GM18951 (cell line): ENCODE measurements at regions of chr2 and their contacts with region 1.

Region 1: GRCh38 chr2:62415019-62415431 is 91.0 kb downstream of the TMEM17 start:
- POLR2A ChIP-seq: peak; percentile 20

Region 2: DNA sequence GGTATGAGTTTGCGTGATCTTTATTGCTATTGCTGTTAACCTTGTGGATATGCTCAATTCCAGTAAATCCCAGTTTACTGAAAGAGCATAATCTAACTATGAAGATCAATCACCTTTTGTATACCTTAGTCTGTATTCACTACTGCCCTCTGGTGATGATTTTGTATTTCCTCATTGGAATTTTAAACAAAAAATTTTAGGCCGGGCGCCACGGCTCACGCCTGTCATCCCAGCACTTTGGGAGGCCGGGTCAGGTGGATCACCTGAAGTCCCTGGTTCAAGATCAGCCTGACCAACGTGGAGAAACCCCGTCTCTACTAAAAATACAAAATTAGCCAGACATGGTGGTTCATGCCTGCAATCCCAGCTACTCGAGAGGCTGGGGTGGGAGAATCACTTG is 504.4 kb before region 1 on chr2:
- in situ Hi-C with region 1: loop called (anchors 5 kb)
- POLR2A ChIP-seq: no peak

Region 3: GRCh38 chr2:61993444-61994024 is 421.5 kb before region 1 on chr2:
- in situ Hi-C with region 1: loop called (anchors 10 kb)
- POLR2A ChIP-seq: no peak

Region 4: GRCh38 chr2:62202019-62202722 is 212.9 kb before region 1 on chr2:
- in situ Hi-C with region 1: loop called (anchors 10 kb)
- POLR2A ChIP-seq: no peak